HAP-1 (cell line): ENCODE measurements at regions of chr1 and their contacts with region 1.

Region 1: GRCh38 chr1:165914136-165914798 is 86.9 kb downstream of the UCK2 start:
- DNase-seq: peak; percentile 65 to 73
- H3K4me3 ChIP-seq: no peak overlapping the region
- H3K4me1 ChIP-seq: no peaks in the 10 kb centered on the region
- H3K27me3 ChIP-seq: no peaks in the 10 kb centered on the region

Region 2: GRCh38 chr1:165392634-165393571 is 521.4 kb before region 1 on chr1:
- in situ Hi-C with region 1: loop called (anchors 25 kb)
- DNase-seq: peak; percentile 58 to 83
- H3K4me3 ChIP-seq: no peak overlapping the region
- H3K4me1 ChIP-seq: no peaks in the 10 kb centered on the region
- H3K27me3 ChIP-seq: peaks cover 20% of the 10 kb centered on the region

Region 3: GRCh38 chr1:166479052-166479631 is 564.9 kb after region 1 on chr1:
- in situ Hi-C with region 1: no loop called
- DNase-seq: peak; percentile 15 to 64
- H3K4me3 ChIP-seq: no peak overlapping the region
- H3K4me1 ChIP-seq: no peaks in the 10 kb centered on the region
- H3K27me3 ChIP-seq: no peaks in the 10 kb centered on the region